Gastrocnemius medialis (tissue), 4 donors: ENCODE measurements at regions of chr1 and their contacts with region 1.

Region 1: GRCh38 chr1:172443626-172444453 is at the start of gene PIGC:
- DNase-seq: peak; percentile 81
- ATAC-seq: peak; percentile 94 to 95
- H3K4me3 ChIP-seq: peak within 1 kb of the TSS; percentile 68 to 98 (median 90)
- H3K27ac ChIP-seq: peak within 1 kb of the TSS; percentile 77 to 88 (median 82)
- H3K4me1 ChIP-seq: peaks cover 46 to 54% of the 10 kb centered on the region in 2 donors
- H3K27me3 ChIP-seq: no peaks in the 10 kb centered on the region
- CTCF ChIP-seq: peak; percentile 67 to 89 (median 82)
- POLR2A ChIP-seq: no peak
- total RNA-seq, gene PIGC: 9.6 to 13.7 (median 12.8) TPM

Region 2: DNA sequence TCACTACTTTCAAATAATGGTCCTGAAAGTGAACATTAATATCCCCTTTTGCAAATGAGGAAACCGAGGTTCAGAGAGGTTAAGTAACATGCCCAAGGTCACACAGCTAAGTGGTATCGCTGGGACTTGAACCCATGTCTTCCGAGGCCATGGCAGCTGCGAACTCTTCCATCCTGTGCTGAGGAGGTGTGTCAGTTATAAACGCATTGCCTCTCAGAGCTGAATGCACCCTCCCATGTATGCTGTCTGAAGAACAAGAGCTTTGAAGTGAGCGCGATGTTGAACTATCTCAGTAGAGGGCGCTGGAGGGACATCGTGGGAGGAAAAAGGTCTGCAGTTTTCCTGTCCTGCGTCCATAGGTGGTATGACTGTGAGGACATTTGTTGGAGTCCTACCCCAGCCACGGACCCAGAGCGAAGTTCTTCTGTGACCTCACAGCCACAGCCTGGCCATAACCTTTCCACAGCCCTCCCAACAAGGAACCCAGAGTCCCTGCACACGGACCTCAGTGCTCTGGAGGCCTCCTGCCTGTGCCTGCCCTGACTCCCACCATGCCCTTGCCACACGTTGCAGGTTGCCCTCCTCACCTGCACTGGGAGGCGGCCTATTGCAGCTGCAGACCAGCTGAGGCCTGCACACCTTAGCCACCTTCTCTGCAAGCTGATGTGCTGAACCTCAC is 798.9 kb before region 1 on chr1:
- in situ Hi-C with region 1: no loop called
- intact Hi-C with region 1: loop called (anchors 10 kb)
- DNase-seq: peak; percentile 42 to 83
- ATAC-seq: peak; percentile 84 to 89
- H3K4me3 ChIP-seq: peak overlapping the region; percentile 1 to 22 (median 16)
- H3K27ac ChIP-seq: peak overlapping the region; percentile 62 to 79 (median 76)
- H3K4me1 ChIP-seq: peaks cover 13 to 15% of the 10 kb centered on the region in 2 donors
- H3K27me3 ChIP-seq: no peaks in the 10 kb centered on the region
- CTCF ChIP-seq: peak; percentile 51 to 87 (median 77)
- POLR2A ChIP-seq: no peak

Region 3: GRCh38 chr1:171781176-171781875 is 662.5 kb before region 1 on chr1 and contains the start of gene METTL13:
- in situ Hi-C with region 1: loop called in 1 of 4 experiments (anchors 25 kb)
- intact Hi-C with region 1: no loop called
- DNase-seq: peak; percentile 98
- ATAC-seq: peak; percentile 98 to 99
- H3K4me3 ChIP-seq: peak within 1 kb of the TSS; percentile 75 to 92 (median 87)
- H3K27ac ChIP-seq: peak within 1 kb of the TSS; percentile 88 to 95 (median 90)
- H3K4me1 ChIP-seq: peaks cover 34 to 35% of the 10 kb centered on the region in 2 donors
- H3K27me3 ChIP-seq: no peaks in the 10 kb centered on the region
- CTCF ChIP-seq: peak in 1 of 5 experiments; percentile 18
- POLR2A ChIP-seq: peak; percentile 82 to 90
- total RNA-seq, gene METTL13: 18.6 to 32.8 (median 23.5) TPM

Region 4: DNA sequence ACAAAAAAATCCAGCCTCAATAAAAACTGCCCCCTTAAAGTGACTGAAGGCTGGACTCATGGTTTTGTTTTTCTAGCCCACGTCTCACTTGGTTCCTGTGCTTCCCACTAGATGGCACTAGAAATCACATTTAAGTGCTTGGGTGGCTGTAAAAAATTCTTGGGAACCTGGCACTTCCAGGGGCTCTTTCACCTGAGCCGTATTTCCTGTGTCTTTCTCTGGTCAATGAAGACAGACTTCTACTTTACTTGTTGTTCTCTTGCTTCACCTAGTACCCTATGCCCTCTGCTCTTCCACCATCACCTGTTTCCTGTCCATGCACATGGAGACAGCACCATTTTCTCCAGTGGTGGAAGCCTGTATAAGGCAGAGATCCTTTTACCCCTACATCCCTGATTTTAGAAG is 642.4 kb before region 1 on chr1:
- in situ Hi-C with region 1: loop called in 2 of 4 experiments (anchors 25 kb)
- intact Hi-C with region 1: no loop called
- DNase-seq: no peak
- ATAC-seq: peak in 1 of 2 donors; percentile 59
- H3K4me3 ChIP-seq: no peak overlapping the region
- H3K27ac ChIP-seq: no peak overlapping the region
- H3K4me1 ChIP-seq: peaks cover 0 to 3% of the 10 kb centered on the region in 2 donors
- H3K27me3 ChIP-seq: no peaks in the 10 kb centered on the region
- CTCF ChIP-seq: peak; percentile 67 to 76 (median 72)
- POLR2A ChIP-seq: no peak

Region 5: GRCh38 chr1:171841050-171841940 is 602.5 kb before region 1 on chr1 and contains the start of gene DNM3:
- in situ Hi-C with region 1: loop called in 1 of 4 experiments (anchors 25 kb)
- intact Hi-C with region 1: no loop called
- DNase-seq: peak; percentile 48 to 64
- ATAC-seq: peak; percentile 91 to 92
- H3K4me3 ChIP-seq: peak within 1 kb of the TSS; percentile 66 to 86 (median 79)
- H3K27ac ChIP-seq: peak within 1 kb of the TSS; percentile 64 to 77 (median 72)
- H3K4me1 ChIP-seq: peaks cover 0 to 11% of the 10 kb centered on the region in 2 donors
- H3K27me3 ChIP-seq: no peaks in the 10 kb centered on the region
- CTCF ChIP-seq: no peak
- POLR2A ChIP-seq: peak; percentile 30 to 64
- total RNA-seq, gene DNM3: 0.35 to 1.6 (median 1.1) TPM

Region 6: DNA sequence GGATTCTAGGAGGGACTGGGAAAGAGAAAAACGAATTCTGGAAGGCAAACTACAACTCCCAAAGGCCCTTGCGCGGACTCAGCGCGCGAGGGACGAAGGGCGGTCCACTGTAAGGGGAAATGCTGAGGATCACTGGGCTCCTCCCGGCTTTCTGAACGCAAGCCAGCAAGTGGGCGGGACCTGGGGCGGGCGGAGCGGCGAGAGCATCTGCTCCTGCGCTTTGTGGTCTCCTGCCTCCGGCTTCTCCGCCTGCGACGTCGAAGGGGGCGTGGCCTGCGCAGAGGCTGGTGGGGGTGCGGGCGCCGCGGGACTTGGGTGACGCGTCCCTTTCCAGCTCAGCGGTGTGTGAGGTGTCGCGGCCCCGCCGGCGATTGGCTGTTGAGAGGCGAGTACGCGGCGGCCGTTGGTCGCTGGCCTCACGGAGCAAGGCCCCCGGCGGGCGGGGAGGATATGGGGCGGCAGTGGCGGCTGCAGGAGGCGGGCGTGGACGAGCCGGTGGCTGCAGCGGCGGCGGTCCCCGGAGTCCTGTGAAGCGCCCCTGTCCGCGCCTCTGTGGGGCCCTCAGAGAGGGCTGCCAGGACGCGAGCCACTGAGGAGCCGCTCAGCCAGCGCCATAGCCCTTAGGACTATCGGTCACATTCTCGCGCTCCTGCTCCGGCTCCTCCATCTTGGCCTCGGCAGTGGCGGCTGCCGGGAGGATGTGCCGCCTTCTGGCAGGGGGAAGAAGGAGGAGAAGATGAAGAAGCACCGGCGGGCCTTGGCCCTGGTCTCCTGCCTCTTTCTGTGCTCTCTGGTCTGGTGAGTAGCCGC is 89.1 kb after region 1 on chr1 and contains the start of gene SUCO:
- in situ Hi-C with region 1: no loop called
- intact Hi-C with region 1: loop called (anchors 2 kb)
- DNase-seq: peak; percentile 99 to 100
- ATAC-seq: peak; percentile 90 to 93
- H3K4me3 ChIP-seq: peak within 1 kb of the TSS; percentile 69 to 99 (median 96)
- H3K27ac ChIP-seq: peak within 1 kb of the TSS; percentile 94 to 100 (median 98)
- H3K4me1 ChIP-seq: peaks cover 19 to 28% of the 10 kb centered on the region in 2 donors
- H3K27me3 ChIP-seq: no peaks in the 10 kb centered on the region
- CTCF ChIP-seq: no peak
- POLR2A ChIP-seq: peak; percentile 92 to 93
- total RNA-seq, gene SUCO: 5.8 to 11.3 (median 6.4) TPM

Region 7: GRCh38 chr1:174159252-174160108 is 1715.6 kb after region 1 on chr1 and contains the start of gene RABGAP1L:
- in situ Hi-C with region 1: no loop called
- intact Hi-C with region 1: loop called (anchors 10 kb)
- DNase-seq: peak; percentile 88 to 90
- ATAC-seq: peak; percentile 94
- H3K4me3 ChIP-seq: peak within 1 kb of the TSS; percentile 90 to 100 (median 93)
- H3K27ac ChIP-seq: peak within 1 kb of the TSS; percentile 92 to 98 (median 94)
- H3K4me1 ChIP-seq: peaks cover 3 to 11% of the 10 kb centered on the region in 2 donors
- H3K27me3 ChIP-seq: no peaks in the 10 kb centered on the region
- CTCF ChIP-seq: peak in 2 of 5 experiments; percentile 9 to 17
- POLR2A ChIP-seq: peak; percentile 73 to 79
- total RNA-seq, gene RABGAP1L: 8.8 to 22.2 (median 14.9) TPM